ENCODE measurements at regions of chr2 and their contacts with region 1.

Region 1: DNA sequence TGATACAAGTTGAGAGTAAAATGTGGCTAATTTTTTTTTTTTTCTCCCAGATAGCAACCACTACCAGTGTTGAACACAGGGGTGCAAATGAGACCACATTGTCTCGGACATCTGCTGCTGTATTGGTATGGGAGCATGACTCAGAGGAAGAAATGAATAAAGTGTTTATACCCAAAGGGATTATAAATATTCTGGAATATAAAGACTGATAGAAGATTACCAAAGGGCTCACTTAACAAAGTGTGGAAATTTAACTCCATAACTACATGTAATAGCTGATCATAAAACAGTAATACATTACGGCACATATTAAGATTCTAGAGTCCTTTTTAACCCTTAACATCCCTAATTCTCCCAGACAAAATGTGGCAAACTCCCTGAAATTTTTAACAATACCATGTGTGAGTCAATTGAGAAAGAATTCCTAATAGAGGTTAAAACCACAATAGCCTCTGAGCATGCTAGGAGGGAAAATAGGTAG is 1023.0 kb upstream of the ACVR2A start:
- DNase-seq: no peak
- ATAC-seq: no peak
- H3K4me3 Mint-ChIP-seq: no peak overlapping the region
- H3K27ac Mint-ChIP-seq: no peak overlapping the region
- H3K4me1 Mint-ChIP-seq: no peaks in the 10 kb centered on the region
- H3K27me3 Mint-ChIP-seq: no peaks in the 10 kb centered on the region
- CTCF ChIP-seq: no peak

Region 2: GRCh38 chr2:146602383-146602782 is 219.5 kb before region 1 on chr2:
- CTCF ChIA-PET with region 1: no interaction called
- POLR2A ChIA-PET with region 1: interaction called, 12 read pairs
- intact Hi-C with region 1: no loop called
- DNase-seq: no peak
- ATAC-seq: no peak
- H3K4me3 Mint-ChIP-seq: no peak overlapping the region
- H3K27ac Mint-ChIP-seq: no peak overlapping the region
- H3K4me1 Mint-ChIP-seq: no peaks in the 10 kb centered on the region
- H3K27me3 Mint-ChIP-seq: no peaks in the 10 kb centered on the region
- CTCF ChIP-seq: no peak

Region 3: GRCh38 chr2:146874260-146874658 is 52.4 kb after region 1 on chr2:
- CTCF ChIA-PET with region 1: no interaction called
- POLR2A ChIA-PET with region 1: no interaction called
- intact Hi-C with region 1: no loop called
- DNase-seq: no peak
- ATAC-seq: no peak
- H3K4me3 Mint-ChIP-seq: no peak overlapping the region
- H3K27ac Mint-ChIP-seq: no peak overlapping the region
- H3K4me1 Mint-ChIP-seq: no peaks in the 10 kb centered on the region
- H3K27me3 Mint-ChIP-seq: no peaks in the 10 kb centered on the region
- CTCF ChIP-seq: no peak